Cardiac septum (tissue), 1 donor: ENCODE measurements at regions of chr1 and their contacts with region 1.

Region 1: DNA sequence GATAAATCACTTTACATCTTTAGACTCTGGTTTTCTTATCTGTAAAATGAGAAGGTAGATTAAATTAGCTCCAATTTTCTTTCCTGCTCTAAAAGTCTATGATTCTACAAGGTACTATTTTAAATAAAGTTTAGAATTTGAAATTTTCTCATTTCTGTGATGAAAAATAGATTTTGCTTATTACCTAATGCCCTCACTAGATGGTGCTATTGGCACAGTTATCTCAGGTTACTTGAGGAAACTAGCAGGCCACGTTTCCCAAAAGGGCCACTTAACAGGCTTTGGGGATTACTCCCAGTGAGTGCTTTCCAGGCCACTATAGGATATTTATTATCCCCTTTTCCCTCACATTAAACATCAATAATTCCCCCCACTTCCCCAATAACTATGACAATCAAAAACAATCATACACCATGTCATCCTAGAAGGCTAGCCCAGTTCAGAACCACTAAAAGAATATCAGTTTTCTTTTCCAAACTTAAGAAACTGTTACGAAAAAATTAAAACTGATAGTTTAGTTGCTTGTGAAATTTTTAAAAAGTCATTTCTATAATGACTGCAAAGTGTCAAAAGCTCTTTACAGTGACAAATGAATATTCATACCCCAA is 30.6 kb downstream of the OMA1 start:
- DNase-seq: no peak

Region 2: GRCh38 chr1:58546520-58547308 is 30.8 kb after region 1 on chr1 and contains the start of gene OMA1:
- intact Hi-C with region 1: loop called (anchors 2 kb)
- DNase-seq: peak; percentile 99
- total RNA-seq, gene OMA1: 32.6 TPM

Region 3: GRCh38 chr1:58652651-58653184 is 136.8 kb after region 1 on chr1:
- intact Hi-C with region 1: loop called (anchors 2 kb)
- DNase-seq: no peak